ENCODE measurements at regions of chr2 and their contacts with region 1.

Region 1: GRCh38 chr2:191555092-191555742 is 122.7 kb upstream of the NABP1 start:
- DNase-seq: peak; percentile 90
- ATAC-seq: peak; percentile 93
- H3K4me3 Mint-ChIP-seq: no peak overlapping the region
- H3K27ac Mint-ChIP-seq: no peak overlapping the region
- H3K4me1 Mint-ChIP-seq: peaks cover 2% of the 10 kb centered on the region
- H3K27me3 Mint-ChIP-seq: peaks cover 14% of the 10 kb centered on the region

Region 2: GRCh38 chr2:191539068-191539467 is 16.1 kb before region 1 on chr2:
- CTCF ChIA-PET with region 1: interaction called, 31 read pairs
- POLR2A ChIA-PET with region 1: interaction called, 3 read pairs
- intact Hi-C with region 1: no loop called
- DNase-seq: peak; percentile 64
- ATAC-seq: no peak
- H3K4me3 Mint-ChIP-seq: no peak overlapping the region
- H3K27ac Mint-ChIP-seq: no peak overlapping the region
- H3K4me1 Mint-ChIP-seq: no peaks in the 10 kb centered on the region
- H3K27me3 Mint-ChIP-seq: no peaks in the 10 kb centered on the region

Region 3: DNA sequence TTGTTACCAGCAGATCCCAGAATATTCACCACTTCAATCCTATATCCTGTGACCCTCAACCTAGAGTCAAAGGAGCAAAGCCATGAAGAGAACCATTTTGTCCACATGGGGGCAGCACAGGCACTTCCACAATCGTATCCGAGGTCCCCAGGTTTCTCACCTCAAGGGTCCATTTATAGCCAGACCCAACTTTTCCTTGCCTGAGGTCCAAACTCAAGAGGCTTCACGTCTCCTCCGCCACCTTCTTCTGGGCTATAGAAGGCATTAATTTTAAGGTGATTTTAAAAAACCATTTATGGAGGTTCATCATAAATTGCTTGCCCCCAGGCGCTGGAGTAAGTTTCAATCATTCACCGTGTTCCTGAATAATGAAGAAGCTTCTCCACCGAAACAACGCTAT is 11.1 kb after region 1 on chr2:
- CTCF ChIA-PET with region 1: interaction called, 32 read pairs
- POLR2A ChIA-PET with region 1: no interaction called
- intact Hi-C with region 1: no loop called
- DNase-seq: peak; percentile 81
- ATAC-seq: peak; percentile 70
- H3K4me3 Mint-ChIP-seq: no peak overlapping the region
- H3K27ac Mint-ChIP-seq: no peak overlapping the region
- H3K4me1 Mint-ChIP-seq: peaks cover 16% of the 10 kb centered on the region
- H3K27me3 Mint-ChIP-seq: peaks cover 19% of the 10 kb centered on the region

Region 4: GRCh38 chr2:191797960-191798876 is 243.0 kb after region 1 on chr2:
- CTCF ChIA-PET with region 1: interaction called, 3 read pairs
- POLR2A ChIA-PET with region 1: no interaction called
- intact Hi-C with region 1: loop called in 1 of 2 experiments (anchors 5 kb)
- DNase-seq: no peak
- ATAC-seq: no peak
- H3K4me3 Mint-ChIP-seq: no peak overlapping the region
- H3K27ac Mint-ChIP-seq: no peak overlapping the region
- H3K4me1 Mint-ChIP-seq: no peaks in the 10 kb centered on the region
- H3K27me3 Mint-ChIP-seq: peaks cover 4% of the 10 kb centered on the region

Region 5: DNA sequence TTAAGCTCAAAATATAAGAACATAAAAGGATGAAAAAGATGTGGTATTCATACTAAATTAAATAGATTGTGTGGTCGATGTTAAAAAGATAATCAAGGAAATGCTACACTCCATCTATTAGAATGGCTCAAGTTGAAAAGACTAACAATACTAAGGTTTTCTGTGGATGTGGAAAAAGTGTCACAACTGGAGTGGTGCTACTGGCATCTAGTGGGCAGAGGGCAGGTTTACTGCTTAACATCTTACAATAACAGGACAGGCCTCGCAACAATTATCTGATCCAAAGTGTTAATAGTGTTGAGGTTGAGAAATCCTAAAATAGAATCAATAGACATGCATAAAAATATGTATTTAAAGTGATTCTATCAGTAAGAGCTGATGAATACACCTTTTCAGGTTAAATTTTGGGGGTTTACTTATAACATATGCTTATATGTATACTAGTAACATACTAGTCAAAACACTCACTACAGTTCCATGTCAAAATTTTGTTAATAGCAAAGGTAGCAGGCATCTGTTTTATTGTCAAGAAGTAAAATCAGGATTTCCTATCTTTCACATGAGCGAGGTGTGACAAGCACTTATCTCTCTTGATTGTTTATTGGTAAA is 731.0 kb after region 1 on chr2:
- CTCF ChIA-PET with region 1: no interaction called
- POLR2A ChIA-PET with region 1: no interaction called
- intact Hi-C with region 1: loop called in 1 of 2 experiments (anchors 10 kb)
- DNase-seq: peak; percentile 11
- ATAC-seq: no peak
- H3K4me3 Mint-ChIP-seq: no peak overlapping the region
- H3K27ac Mint-ChIP-seq: no peak overlapping the region
- H3K4me1 Mint-ChIP-seq: no peaks in the 10 kb centered on the region
- H3K27me3 Mint-ChIP-seq: peaks cover 2% of the 10 kb centered on the region

Measured in activated CD4-positive, alpha-beta T cell treated with anti-CD3 and anti-CD28 coated beads for 36 hours (primary cell).